ENCODE measurements at regions of chr9 and their contacts with region 1.

Region 1: GRCh38 chr9:19946441-19947109 is 157.7 kb upstream of the SLC24A2 start:
- DNase-seq: peak; percentile 64
- ATAC-seq: peak; percentile 79
- H3K4me3 Mint-ChIP-seq: no peak overlapping the region
- H3K27ac Mint-ChIP-seq: peak overlapping the region; percentile 81
- H3K4me1 Mint-ChIP-seq: peaks cover 31% of the 10 kb centered on the region
- H3K27me3 Mint-ChIP-seq: peaks cover 19% of the 10 kb centered on the region

Region 2: GRCh38 chr9:19925817-19926503 is 20.6 kb before region 1 on chr9:
- CTCF ChIA-PET with region 1: interaction called, 11 read pairs
- POLR2A ChIA-PET with region 1: no interaction called
- DNase-seq: peak; percentile 89
- ATAC-seq: peak; percentile 98
- H3K4me3 Mint-ChIP-seq: peak overlapping the region; percentile 73
- H3K27ac Mint-ChIP-seq: peak overlapping the region; percentile 89
- H3K4me1 Mint-ChIP-seq: peaks cover 54% of the 10 kb centered on the region
- H3K27me3 Mint-ChIP-seq: peaks cover 8% of the 10 kb centered on the region

Region 3: DNA sequence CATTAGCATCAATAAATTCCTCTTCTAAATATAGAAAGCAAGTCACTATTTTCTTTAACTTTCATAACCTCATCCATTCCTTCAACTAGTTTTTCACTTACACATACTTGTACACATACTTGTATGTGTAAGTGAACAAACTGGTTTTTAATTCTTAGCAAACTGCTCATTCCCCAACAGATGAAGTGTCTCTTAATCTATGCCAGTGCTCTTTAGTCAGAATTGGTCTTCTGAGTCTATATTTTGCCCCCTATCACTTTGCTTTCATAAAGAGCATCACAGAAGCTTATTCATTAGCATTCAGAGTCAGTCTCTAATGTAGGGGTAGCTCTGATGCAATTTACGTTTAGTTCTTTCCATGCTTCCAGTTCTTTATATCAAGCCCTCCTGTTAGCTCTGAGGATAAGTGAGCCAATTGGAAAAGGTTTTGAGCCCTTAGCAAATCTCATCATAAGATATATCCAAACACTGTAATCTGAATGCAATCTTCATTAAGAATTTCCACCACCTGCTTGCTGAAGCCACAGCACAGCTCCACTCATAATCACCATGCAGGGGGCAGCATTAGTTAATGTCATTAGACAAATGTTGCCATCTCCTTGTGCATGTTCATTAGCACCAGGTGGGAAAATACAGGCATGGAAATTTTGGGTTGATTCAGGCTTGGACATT is 20.8 kb after region 1 on chr9:
- CTCF ChIA-PET with region 1: interaction called, 11 read pairs
- POLR2A ChIA-PET with region 1: no interaction called
- DNase-seq: no peak
- ATAC-seq: no peak
- H3K4me3 Mint-ChIP-seq: no peak overlapping the region
- H3K27ac Mint-ChIP-seq: no peak overlapping the region
- H3K4me1 Mint-ChIP-seq: peaks cover 13% of the 10 kb centered on the region
- H3K27me3 Mint-ChIP-seq: peaks cover 2% of the 10 kb centered on the region

Region 4: DNA sequence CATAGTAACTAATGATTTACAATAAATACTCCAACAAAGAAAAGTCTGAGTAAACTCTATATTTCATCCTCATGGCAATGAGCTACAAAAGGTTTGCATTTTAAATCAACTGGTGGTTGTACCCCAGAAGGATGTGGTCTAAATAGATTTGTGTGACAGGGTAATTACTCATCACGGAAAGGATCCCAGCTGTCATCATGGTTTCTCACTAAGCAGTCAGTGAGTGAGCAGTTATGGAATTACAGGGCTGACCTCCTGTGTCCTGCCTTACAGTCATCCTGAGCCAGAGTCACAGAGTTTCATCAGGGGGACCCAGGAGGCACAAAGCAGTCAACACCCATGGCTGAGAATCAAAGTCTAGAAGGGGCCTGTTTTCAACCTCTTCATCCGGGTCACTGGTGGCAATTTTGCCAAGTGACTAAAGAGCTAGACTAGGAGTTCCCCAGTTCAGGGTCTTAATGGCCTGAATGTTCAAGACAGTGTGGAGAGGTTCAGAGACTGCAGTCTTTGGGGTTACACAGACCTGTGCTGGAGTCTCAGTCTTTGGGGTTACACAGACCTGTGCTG is 53.0 kb after region 1 on chr9:
- CTCF ChIA-PET with region 1: interaction called, 12 read pairs
- POLR2A ChIA-PET with region 1: no interaction called
- DNase-seq: peak; percentile 76
- ATAC-seq: peak; percentile 88
- H3K4me3 Mint-ChIP-seq: peak overlapping the region; percentile 40
- H3K27ac Mint-ChIP-seq: peak overlapping the region; percentile 95
- H3K4me1 Mint-ChIP-seq: peaks cover 53% of the 10 kb centered on the region
- H3K27me3 Mint-ChIP-seq: no peaks in the 10 kb centered on the region

Region 5: GRCh38 chr9:20015427-20015931 is 68.9 kb after region 1 on chr9:
- CTCF ChIA-PET with region 1: interaction called, 15 read pairs
- POLR2A ChIA-PET with region 1: no interaction called
- DNase-seq: peak; percentile 39
- ATAC-seq: peak; percentile 57
- H3K4me3 Mint-ChIP-seq: no peak overlapping the region
- H3K27ac Mint-ChIP-seq: peak overlapping the region; percentile 90
- H3K4me1 Mint-ChIP-seq: peaks cover 33% of the 10 kb centered on the region
- H3K27me3 Mint-ChIP-seq: no peaks in the 10 kb centered on the region

Region 6: GRCh38 chr9:20087481-20087880 is 140.9 kb after region 1 on chr9:
- CTCF ChIA-PET with region 1: no interaction called
- POLR2A ChIA-PET with region 1: no interaction called
- DNase-seq: no peak
- ATAC-seq: no peak
- H3K4me3 Mint-ChIP-seq: no peak overlapping the region
- H3K27ac Mint-ChIP-seq: no peak overlapping the region
- H3K4me1 Mint-ChIP-seq: peaks cover 18% of the 10 kb centered on the region
- H3K27me3 Mint-ChIP-seq: peaks cover 4% of the 10 kb centered on the region